PC-3 (cell line): ENCODE measurements at regions of chr1 and their contacts with region 1.

Region 1: DNA sequence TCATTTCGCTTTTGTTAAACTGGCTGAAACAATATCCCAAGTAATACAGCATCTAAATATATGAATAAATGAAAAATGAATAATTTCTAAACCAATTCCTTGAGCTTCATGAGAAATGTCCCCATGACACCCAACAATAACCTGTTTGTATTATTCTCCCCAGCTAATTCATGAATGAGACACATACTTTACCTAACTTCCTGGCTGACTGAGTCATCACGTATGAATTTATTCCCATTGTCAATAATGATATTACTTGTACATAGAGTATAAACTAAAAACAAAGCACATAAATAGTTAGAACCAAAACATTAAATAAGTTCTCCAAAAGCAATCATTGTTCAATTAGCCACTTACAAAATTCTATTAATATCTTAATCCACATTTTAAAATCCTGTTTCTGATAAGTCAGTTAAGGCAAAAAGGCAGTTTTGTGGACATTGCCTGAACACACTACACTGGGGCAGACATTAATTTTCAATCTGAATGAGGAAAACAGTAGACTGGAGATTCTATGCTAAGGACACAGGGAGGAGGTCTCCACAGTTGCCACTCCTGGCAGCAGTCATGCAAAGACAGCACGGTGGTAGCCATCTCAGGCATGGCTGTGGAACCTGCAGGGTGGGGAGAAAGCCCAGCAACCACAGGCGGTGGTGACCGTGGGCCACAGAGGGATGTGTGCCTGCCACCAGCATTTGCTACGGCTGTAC is 48.2 kb downstream of the SLC9C2 start:
- DNase-seq: peak; percentile 98
- ATAC-seq: peak; percentile 98
- H3K4me3 ChIP-seq: 0 out of 2 replicates have a peak overlapping the region, but pooled peaks have one; percentile 1
- H3K27ac ChIP-seq: peak overlapping the region; percentile 69
- H3K4me1 ChIP-seq: peaks cover 26% of the 10 kb centered on the region
- H3K27me3 ChIP-seq: no peaks in the 10 kb centered on the region
- CTCF ChIP-seq: no peak

Region 2: DNA sequence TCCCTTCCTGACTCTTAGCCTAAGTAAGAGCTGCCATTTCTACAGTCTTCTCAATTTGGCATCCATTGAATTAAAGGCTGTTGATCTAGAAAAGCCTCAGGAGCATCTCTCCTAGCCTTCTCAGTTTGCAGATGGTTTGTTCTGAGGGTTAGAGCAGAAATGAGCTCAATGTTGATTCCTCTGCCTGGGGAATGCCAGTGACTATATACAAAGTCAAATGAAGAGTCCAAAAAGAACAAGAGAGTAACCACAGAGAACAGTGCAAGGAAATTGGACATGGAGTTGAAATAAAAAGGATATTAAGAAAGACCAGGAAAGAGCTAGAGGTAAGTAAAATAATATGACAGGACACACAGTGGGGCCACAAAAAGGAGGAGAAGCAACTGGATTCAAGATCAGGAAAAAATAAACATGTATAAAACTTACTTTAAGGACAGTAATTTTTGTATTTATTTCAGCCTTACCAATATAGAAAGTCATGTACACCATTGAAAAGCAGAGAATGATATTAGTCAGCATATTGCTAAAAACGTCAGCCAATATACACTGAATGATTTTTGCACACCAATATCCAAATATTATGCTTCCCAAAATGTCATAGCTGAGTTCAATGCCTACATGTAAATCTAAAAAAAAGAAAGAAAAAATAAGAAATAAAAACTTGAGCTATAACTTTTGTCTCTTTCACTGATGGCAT is 26.8 kb after region 1 on chr1:
- CTCF ChIA-PET with region 1: no interaction called
- POLR2A ChIA-PET with region 1: no interaction called
- intact Hi-C with region 1: loop called (anchors 1 kb)
- DNase-seq: no peak
- ATAC-seq: no peak
- H3K4me3 ChIP-seq: no peak overlapping the region
- H3K27ac ChIP-seq: no peak overlapping the region
- H3K4me1 ChIP-seq: no peaks in the 10 kb centered on the region
- H3K27me3 ChIP-seq: no peaks in the 10 kb centered on the region
- CTCF ChIP-seq: no peak

Region 3: GRCh38 chr1:173590557-173590956 is 35.9 kb after region 1 on chr1:
- CTCF ChIA-PET with region 1: no interaction called
- POLR2A ChIA-PET with region 1: no interaction called
- intact Hi-C with region 1: loop called (anchors 1 kb)
- DNase-seq: peak; percentile 97
- ATAC-seq: peak; percentile 100
- H3K4me3 ChIP-seq: no peak overlapping the region
- H3K27ac ChIP-seq: peak overlapping the region; percentile 42
- H3K4me1 ChIP-seq: peaks cover 12% of the 10 kb centered on the region
- H3K27me3 ChIP-seq: no peaks in the 10 kb centered on the region
- CTCF ChIP-seq: no peak